ENCODE measurements at regions of chr2 and their contacts with region 1.

Region 1: GRCh38 chr2:63189026-63189425 is 138.4 kb downstream of the OTX1 start:
- DNase-seq: peak; percentile 68
- H3K4me3 Mint-ChIP-seq: peak overlapping the region; percentile 54
- H3K27ac Mint-ChIP-seq: peak overlapping the region; percentile 31
- H3K4me1 Mint-ChIP-seq: peaks cover 8% of the 10 kb centered on the region
- H3K27me3 Mint-ChIP-seq: no peaks in the 10 kb centered on the region
- CTCF ChIP-seq: peak; percentile 85

Region 2: DNA sequence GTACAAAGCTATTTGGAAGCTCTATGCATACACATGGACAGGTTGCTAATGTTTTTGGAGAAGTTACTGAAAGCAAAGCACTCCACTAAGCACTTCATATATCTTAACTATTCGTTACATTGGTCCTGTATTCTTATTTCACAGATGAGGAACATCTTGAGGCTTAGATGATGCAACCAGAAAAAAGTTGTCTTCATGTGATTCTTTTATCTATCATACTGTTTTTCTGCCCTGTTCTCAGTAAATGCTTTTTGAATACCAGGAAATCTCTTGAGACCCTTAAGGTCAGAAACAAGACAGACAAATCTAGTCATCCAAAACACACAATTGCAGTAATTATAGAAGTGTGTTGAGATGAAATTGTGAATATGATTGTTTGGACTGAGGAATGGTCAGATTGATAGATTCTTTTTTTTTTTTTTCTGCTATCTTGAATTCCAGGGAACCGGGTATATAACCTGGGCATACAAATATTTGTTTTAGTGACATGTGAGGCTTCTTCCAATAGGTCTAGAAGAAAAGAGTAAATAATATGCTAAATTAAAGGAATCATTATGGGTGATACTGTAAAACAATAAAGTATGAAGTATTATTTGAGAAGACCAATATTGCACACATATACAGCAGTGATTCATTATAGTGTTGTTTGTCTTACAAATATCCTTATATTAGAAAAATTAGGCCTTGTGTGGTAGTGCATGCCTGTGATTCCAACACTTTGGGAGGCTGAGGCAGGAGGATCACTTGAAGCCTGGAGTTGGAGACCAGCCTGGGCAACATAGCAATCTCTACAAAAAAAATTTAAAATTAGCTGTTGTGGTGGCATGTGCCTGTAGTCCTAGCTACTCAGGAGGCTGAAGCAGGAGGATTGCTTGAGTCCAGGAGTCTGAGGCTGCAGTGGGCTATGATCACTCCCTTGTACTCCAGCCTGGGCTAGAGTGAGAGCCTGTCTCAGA is 449.8 kb before region 1 on chr2:
- CTCF ChIA-PET with region 1: no interaction called
- intact Hi-C with region 1: no loop called
- DNase-seq: no peak
- H3K4me3 Mint-ChIP-seq: no peak overlapping the region
- H3K27ac Mint-ChIP-seq: no peak overlapping the region
- H3K4me1 Mint-ChIP-seq: peaks cover 52% of the 10 kb centered on the region
- H3K27me3 Mint-ChIP-seq: no peaks in the 10 kb centered on the region
- CTCF ChIP-seq: no peak

Region 3: GRCh38 chr2:62787386-62787785 is 401.6 kb before region 1 on chr2:
- CTCF ChIA-PET with region 1: no interaction called
- intact Hi-C with region 1: loop called (anchors 2 kb)
- DNase-seq: no peak
- H3K4me3 Mint-ChIP-seq: no peak overlapping the region
- H3K27ac Mint-ChIP-seq: no peak overlapping the region
- H3K4me1 Mint-ChIP-seq: peaks cover 50% of the 10 kb centered on the region
- H3K27me3 Mint-ChIP-seq: no peaks in the 10 kb centered on the region
- CTCF ChIP-seq: no peak

Region 4: DNA sequence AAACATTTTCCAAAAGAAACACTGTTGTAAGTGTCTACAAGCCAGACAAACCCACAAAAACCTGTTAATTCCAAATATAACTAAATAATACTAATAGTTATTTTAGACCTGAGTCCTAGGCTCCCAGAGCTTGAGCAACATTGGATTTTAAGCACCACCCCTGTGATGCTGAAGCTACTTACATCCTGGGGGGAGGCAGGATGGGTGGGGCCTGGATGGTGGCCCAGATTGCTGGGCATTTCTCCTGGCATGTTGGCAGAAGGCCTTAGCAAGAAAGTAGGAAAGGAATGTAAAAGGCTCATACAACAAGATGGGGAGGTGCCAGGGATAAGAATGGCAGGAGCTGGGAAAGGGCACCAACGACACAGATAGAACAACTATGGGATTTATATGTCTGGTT is 189.1 kb before region 1 on chr2:
- CTCF ChIA-PET with region 1: no interaction called
- intact Hi-C with region 1: loop called (anchors 10 kb)
- DNase-seq: peak; percentile 7
- H3K4me3 Mint-ChIP-seq: no peak overlapping the region
- H3K27ac Mint-ChIP-seq: no peak overlapping the region
- H3K4me1 Mint-ChIP-seq: no peaks in the 10 kb centered on the region
- H3K27me3 Mint-ChIP-seq: no peaks in the 10 kb centered on the region
- CTCF ChIP-seq: no peak

Region 5: GRCh38 chr2:63050334-63051041 is 138.5 kb before region 1 on chr2 and contains the start of gene OTX1:
- CTCF ChIA-PET with region 1: interaction called, 3 read pairs
- intact Hi-C with region 1: loop called (anchors 1 kb)
- DNase-seq: peak; percentile 93
- H3K4me3 Mint-ChIP-seq: peak within 1 kb of the TSS; percentile 80
- H3K27ac Mint-ChIP-seq: peak within 1 kb of the TSS; percentile 75
- H3K4me1 Mint-ChIP-seq: peaks cover 9% of the 10 kb centered on the region
- H3K27me3 Mint-ChIP-seq: no peaks in the 10 kb centered on the region
- CTCF ChIP-seq: no peak
- total RNA-seq, gene OTX1: 7.1 and 8.3 TPM in 2 replicates

Region 6: GRCh38 chr2:63059793-63060471 is 129.1 kb before region 1 on chr2:
- CTCF ChIA-PET with region 1: no interaction called
- intact Hi-C with region 1: loop called (anchors 5 kb)
- DNase-seq: peak; percentile 37
- H3K4me3 Mint-ChIP-seq: peak overlapping the region; percentile 67
- H3K27ac Mint-ChIP-seq: peak overlapping the region; percentile 54
- H3K4me1 Mint-ChIP-seq: no peaks in the 10 kb centered on the region
- H3K27me3 Mint-ChIP-seq: no peaks in the 10 kb centered on the region
- CTCF ChIP-seq: no peak

Region 7: GRCh38 chr2:63081404-63081803 is 107.6 kb before region 1 on chr2:
- CTCF ChIA-PET with region 1: interaction called, 3 read pairs
- intact Hi-C with region 1: loop called (anchors 10 kb)
- DNase-seq: no peak
- H3K4me3 Mint-ChIP-seq: no peak overlapping the region
- H3K27ac Mint-ChIP-seq: no peak overlapping the region
- H3K4me1 Mint-ChIP-seq: peaks cover 48% of the 10 kb centered on the region
- H3K27me3 Mint-ChIP-seq: no peaks in the 10 kb centered on the region
- CTCF ChIP-seq: no peak

Region 8: DNA sequence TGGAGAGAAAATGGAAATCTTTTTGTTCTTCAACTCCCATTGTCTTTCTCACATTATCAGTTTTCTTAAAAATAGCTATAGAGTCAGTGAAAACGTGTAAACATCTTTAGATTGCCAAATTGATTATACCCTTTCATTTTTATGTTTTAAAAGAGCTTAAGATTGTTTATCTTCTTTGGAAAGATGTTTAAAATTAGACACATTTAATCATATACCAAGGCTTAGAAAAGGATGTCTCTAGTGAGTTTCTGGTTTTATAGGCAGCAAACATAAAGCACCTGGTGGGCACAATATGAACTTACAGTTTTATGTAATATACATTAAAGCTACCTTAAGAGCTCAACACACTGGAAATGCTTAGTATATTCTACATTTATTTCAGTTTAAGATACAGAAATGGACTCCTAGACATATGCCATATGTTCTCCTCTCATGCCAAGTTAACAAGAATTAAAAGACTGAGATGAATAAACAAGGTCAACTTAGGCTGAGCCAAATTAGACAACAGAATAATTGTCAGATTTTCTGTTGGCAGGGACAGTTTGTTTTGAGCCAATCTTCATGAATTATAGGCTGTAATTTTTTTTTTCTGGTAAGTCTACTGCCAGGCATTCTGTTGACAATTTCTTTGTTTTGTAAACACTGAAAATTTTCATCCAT is 25.7 kb before region 1 on chr2:
- CTCF ChIA-PET with region 1: no interaction called
- intact Hi-C with region 1: no loop called
- DNase-seq: no peak
- H3K4me3 Mint-ChIP-seq: no peak overlapping the region
- H3K27ac Mint-ChIP-seq: no peak overlapping the region
- H3K4me1 Mint-ChIP-seq: no peaks in the 10 kb centered on the region
- H3K27me3 Mint-ChIP-seq: no peaks in the 10 kb centered on the region
- CTCF ChIP-seq: no peak

Region 9: GRCh38 chr2:63488118-63488713 is 299.2 kb after region 1 on chr2:
- CTCF ChIA-PET with region 1: no interaction called
- intact Hi-C with region 1: loop called (anchors 10 kb)
- DNase-seq: peak; percentile 39
- H3K4me3 Mint-ChIP-seq: no peak overlapping the region
- H3K27ac Mint-ChIP-seq: no peak overlapping the region
- H3K4me1 Mint-ChIP-seq: no peaks in the 10 kb centered on the region
- H3K27me3 Mint-ChIP-seq: no peaks in the 10 kb centered on the region
- CTCF ChIP-seq: peak; percentile 15

Measured in Calu3 (cell line).